CD4-positive, alpha-beta memory T cell (primary cell): ENCODE measurements at regions of chr3 and their contacts with region 1.

Region 1: GRCh38 chr3:119676771-119677640 is at the start of gene COX17:
- DNase-seq: peak; percentile 94 to 99 (median 97)
- H3K4me3 ChIP-seq: peak within 1 kb of the TSS; percentile 72 to 89
- H3K4me3 Mint-ChIP-seq: peak within 1 kb of the TSS; percentile 83 to 97 (median 91)
- H3K27ac ChIP-seq: peak within 1 kb of the TSS; percentile 69
- H3K27ac Mint-ChIP-seq: peak within 1 kb of the TSS; percentile 87 to 99 (median 96)
- H3K4me1 ChIP-seq: peaks cover 34% of the 10 kb centered on the region
- H3K4me1 Mint-ChIP-seq: peaks cover 27 to 42% (median 32%) of the 10 kb centered on the region in 4 donors
- H3K27me3 ChIP-seq: no peaks in the 10 kb centered on the region
- H3K27me3 Mint-ChIP-seq: no peaks in the 10 kb centered on the region
- total RNA-seq, gene COX17: 46.1 to 48.9 TPM

Region 2: GRCh38 chr3:119279101-119279554 is 397.9 kb before region 1 on chr3:
- CTCF ChIA-PET with region 1: no interaction called
- POLR2A ChIA-PET with region 1: no interaction called
- intact Hi-C with region 1: loop called (anchors 1 kb)
- DNase-seq: no peak
- H3K4me3 ChIP-seq: no peak overlapping the region
- H3K4me3 Mint-ChIP-seq: no peak overlapping the region
- H3K27ac ChIP-seq: no peak overlapping the region
- H3K27ac Mint-ChIP-seq: peak overlapping the region in 1 of 7 donors; percentile 12
- H3K4me1 ChIP-seq: no peaks in the 10 kb centered on the region
- H3K4me1 Mint-ChIP-seq: peaks cover 0 to 4% (median 2%) of the 10 kb centered on the region in 4 donors
- H3K27me3 ChIP-seq: no peaks in the 10 kb centered on the region
- H3K27me3 Mint-ChIP-seq: no peaks in the 10 kb centered on the region

Region 3: DNA sequence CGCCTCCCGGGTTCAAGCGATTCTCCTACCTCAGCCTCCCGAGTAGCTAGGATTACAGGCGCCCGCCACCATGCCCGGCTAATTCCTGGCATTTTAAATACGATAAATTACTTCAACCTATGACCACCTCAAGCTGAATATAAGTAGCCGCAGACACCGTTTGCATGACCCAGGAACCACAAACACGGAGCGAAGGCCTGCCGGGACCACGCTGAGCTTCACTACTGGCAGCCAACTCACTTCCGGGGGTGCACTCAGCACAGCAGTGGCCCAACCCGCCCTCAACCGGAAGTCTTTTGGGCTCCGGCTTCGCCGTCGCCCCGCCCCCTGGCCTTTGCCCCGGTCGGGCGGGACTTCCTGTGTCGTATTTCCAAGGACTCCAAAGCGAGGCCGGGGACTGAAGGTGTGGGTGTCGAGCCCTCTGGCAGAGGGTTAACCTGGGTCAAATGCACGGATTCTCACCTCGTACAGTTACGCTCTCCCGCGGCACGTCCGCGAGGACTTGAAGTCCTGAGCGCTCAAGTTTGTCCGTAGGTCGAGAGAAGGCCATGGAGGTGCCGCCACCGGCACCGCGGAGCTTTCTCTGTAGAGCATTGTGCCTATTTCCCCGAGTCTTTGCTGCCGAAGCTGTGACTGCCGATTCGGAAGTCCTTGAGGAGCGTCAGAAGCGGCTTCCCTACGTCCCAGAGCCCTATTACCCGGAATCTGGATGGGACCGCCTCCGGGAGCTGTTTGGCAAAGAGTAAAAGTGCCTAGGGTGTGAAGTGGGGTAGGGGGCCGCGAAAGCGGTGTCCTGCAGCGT is 178.6 kb before region 1 on chr3 and contains the start of gene TIMMDC1:
- CTCF ChIA-PET with region 1: no interaction called
- POLR2A ChIA-PET with region 1: interaction called, 20 read pairs
- intact Hi-C with region 1: loop called (anchors 1 kb)
- DNase-seq: peak; percentile 96 to 98 (median 97)
- H3K4me3 ChIP-seq: peak within 1 kb of the TSS; percentile 82 to 93
- H3K4me3 Mint-ChIP-seq: peak within 1 kb of the TSS; percentile 98 to 100 (median 99)
- H3K27ac ChIP-seq: peak within 1 kb of the TSS; percentile 92
- H3K27ac Mint-ChIP-seq: peak within 1 kb of the TSS; percentile 99 to 100 (median 100)
- H3K4me1 ChIP-seq: peaks cover 31% of the 10 kb centered on the region
- H3K4me1 Mint-ChIP-seq: peaks cover 13 to 42% (median 33%) of the 10 kb centered on the region in 4 donors
- H3K27me3 ChIP-seq: no peaks in the 10 kb centered on the region
- H3K27me3 Mint-ChIP-seq: no peaks in the 10 kb centered on the region
- total RNA-seq, gene TIMMDC1: 72.3 to 80.9 TPM

Region 4: GRCh38 chr3:120348981-120349818 is 672.2 kb after region 1 on chr3 and contains the start of gene LRRC58:
- CTCF ChIA-PET with region 1: no interaction called
- POLR2A ChIA-PET with region 1: interaction called, 4 read pairs
- intact Hi-C with region 1: loop called (anchors 10 kb)
- DNase-seq: peak; percentile 86 to 93 (median 93)
- H3K4me3 ChIP-seq: peak within 1 kb of the TSS; percentile 67 to 91
- H3K4me3 Mint-ChIP-seq: peak within 1 kb of the TSS; percentile 88 to 95 (median 93)
- H3K27ac ChIP-seq: peak within 1 kb of the TSS; percentile 77
- H3K27ac Mint-ChIP-seq: peak within 1 kb of the TSS; percentile 87 to 96 (median 92)
- H3K4me1 ChIP-seq: peaks cover 46% of the 10 kb centered on the region
- H3K4me1 Mint-ChIP-seq: peaks cover 36 to 50% (median 43%) of the 10 kb centered on the region in 4 donors
- H3K27me3 ChIP-seq: no peaks in the 10 kb centered on the region
- H3K27me3 Mint-ChIP-seq: peaks cover 2% of the 10 kb centered on the region in 2 donors
- total RNA-seq, gene LRRC58: 23.0 to 23.6 TPM

Region 5: DNA sequence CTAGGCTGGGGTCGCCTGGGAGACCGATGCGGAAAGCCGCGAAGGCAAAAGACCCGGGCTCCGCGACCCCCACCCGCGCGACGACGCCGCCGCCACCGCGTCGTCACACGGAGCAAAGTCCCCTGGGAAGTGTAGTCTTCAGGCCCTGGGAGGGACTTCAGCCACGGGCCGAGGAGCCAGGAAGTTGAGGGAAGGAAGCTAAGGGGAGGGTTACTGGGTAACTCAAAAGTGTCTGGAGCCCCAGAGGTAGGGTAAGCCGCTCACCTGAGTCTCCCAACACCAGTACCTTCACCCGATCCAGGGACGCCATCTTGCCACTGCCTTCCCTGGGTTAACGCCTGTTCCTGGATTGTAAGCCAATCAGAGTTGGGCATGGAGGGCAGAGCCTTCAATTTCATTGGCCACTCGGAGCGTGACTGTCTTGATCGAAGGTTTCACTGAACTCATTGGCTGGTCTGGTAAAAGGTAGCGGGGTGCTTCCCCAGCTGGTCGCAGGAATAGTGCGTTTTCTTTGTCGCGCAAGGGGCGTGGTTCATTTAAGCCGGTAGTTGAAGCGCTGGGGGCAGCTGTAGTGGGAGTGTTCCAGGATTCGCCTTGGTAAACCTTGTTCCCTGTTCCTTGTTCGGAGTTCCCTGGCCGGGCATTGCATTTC is 1065.3 kb after region 1 on chr3 and contains the starts of genes GTF2E1 and RABL3:
- CTCF ChIA-PET with region 1: no interaction called
- POLR2A ChIA-PET with region 1: no interaction called
- intact Hi-C with region 1: loop called (anchors 5 kb)
- DNase-seq: peak; percentile 96 to 99 (median 97)
- H3K4me3 ChIP-seq: peak within 1 kb of the TSS; percentile 83 to 92
- H3K4me3 Mint-ChIP-seq: peak within 1 kb of the TSS; percentile 89 to 98 (median 96)
- H3K27ac ChIP-seq: peak within 1 kb of the TSS; percentile 98
- H3K27ac Mint-ChIP-seq: peak within 1 kb of the TSS; percentile 96 to 99 (median 98)
- H3K4me1 ChIP-seq: peaks cover 34% of the 10 kb centered on the region
- H3K4me1 Mint-ChIP-seq: peaks cover 21 to 58% (median 39%) of the 10 kb centered on the region in 4 donors
- H3K27me3 ChIP-seq: no peaks in the 10 kb centered on the region
- H3K27me3 Mint-ChIP-seq: no peaks in the 10 kb centered on the region
- total RNA-seq, gene GTF2E1: 30.0 to 30.2 TPM
- total RNA-seq, gene RABL3: 31.9 to 33.0 TPM